ENCODE measurements at regions of chr4 and their contacts with region 1.

Region 1: DNA sequence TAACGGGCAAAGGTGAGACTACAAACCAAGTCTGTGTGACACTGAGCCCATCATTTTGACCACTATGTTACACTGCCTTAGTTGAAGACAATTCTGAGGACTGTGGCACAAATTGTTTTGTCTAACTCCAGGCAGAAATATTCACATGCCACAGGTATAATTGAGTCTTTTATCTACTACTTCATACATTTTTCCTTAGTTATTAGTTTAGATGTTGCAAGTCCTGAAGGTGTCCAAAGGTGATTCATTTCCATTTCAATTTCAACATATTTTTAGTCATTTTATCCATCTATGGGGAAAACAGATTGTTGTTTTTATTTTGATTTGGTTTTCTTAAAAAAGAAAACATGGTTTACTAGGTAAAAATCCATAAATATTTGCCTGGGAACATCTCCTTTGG is 341.7 kb upstream of the SMIM31 start:
- DNase-seq: no peak
- H3K4me3 ChIP-seq: no peak overlapping the region
- CTCF ChIP-seq: no peak

Region 2: GRCh38 chr4:164467493-164467892 is 55.2 kb after region 1 on chr4:
- in situ Hi-C with region 1: loop called (anchors 5 kb)
- DNase-seq: no peak
- H3K4me3 ChIP-seq: no peak overlapping the region
- CTCF ChIP-seq: no peak

Region 3: GRCh38 chr4:165060942-165061341 is 648.7 kb after region 1 on chr4:
- in situ Hi-C with region 1: no loop called
- DNase-seq: no peak
- H3K4me3 ChIP-seq: no peak overlapping the region
- CTCF ChIP-seq: peak; percentile 37

Measured in astrocyte of the cerebellum (primary cell).